Psoas muscle (tissue), 8 donors: ENCODE measurements at regions of chr6 and their contacts with region 1.

Region 1: DNA sequence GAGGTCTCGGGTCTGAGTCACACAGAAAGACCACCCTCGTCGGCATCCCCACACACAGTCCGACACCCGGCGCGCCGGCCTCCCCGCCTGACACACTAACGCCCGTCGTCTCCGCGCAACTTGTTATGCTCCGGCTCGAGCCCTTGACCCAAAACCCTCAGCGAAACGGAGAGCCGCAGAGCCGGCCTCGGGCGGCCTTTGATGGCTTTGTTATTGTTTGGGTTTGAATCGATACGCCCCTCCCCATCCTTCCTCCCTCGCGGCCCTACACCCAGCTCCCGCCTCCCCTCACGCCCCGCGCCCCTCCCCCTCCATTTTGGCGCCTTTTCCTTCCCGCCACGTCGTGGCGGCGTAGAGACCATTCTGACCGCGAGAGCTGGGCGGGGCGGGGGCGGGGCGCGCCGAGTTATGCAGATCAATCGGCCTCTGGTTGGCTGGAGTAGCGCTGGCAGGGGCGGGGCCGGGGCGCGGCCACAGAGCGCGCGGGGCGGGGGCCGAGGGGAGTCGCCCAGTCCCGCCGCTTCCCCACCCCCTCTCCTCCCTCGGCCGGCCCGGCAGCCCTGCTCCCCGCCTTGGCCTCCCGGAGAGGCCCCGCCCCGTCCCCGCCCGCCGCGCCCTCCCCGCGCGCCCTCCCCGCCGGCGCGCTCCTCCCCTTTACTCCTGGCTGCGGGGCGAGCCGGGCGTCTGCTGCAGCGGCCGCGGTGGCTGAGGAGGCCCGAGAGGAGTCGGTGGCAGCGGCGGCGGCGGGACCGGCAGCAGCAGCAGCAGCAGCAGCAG is at the start of gene PIM1:
- DNase-seq: peak; percentile 100
- ATAC-seq: peak; percentile 88 to 94 (median 90)
- H3K4me3 ChIP-seq: peak within 1 kb of the TSS; percentile 97
- H3K27ac ChIP-seq: peak within 1 kb of the TSS; percentile 94
- H3K4me1 ChIP-seq: peaks cover 10% of the 10 kb centered on the region
- H3K27me3 ChIP-seq: no peaks in the 10 kb centered on the region
- CTCF ChIP-seq: no peak
- total RNA-seq, gene PIM1: 18.0 to 45.5 (median 32.8) TPM

Region 2: GRCh38 chr6:36897609-36898008 is 272.1 kb before region 1 on chr6:
- intact Hi-C with region 1: no loop called
- DNase-seq: no peak
- ATAC-seq: peak in 1 of 4 donors; percentile 41
- H3K4me3 ChIP-seq: no peak overlapping the region
- H3K27ac ChIP-seq: no peak overlapping the region
- H3K4me1 ChIP-seq: no peaks in the 10 kb centered on the region
- H3K27me3 ChIP-seq: no peaks in the 10 kb centered on the region
- CTCF ChIP-seq: no peak

Region 3: GRCh38 chr6:37018198-37019064 is 151.3 kb before region 1 on chr6:
- intact Hi-C with region 1: loop called in 1 of 2 experiments (anchors 1 kb)
- DNase-seq: peak; percentile 90 to 95
- ATAC-seq: peak; percentile 96 to 99 (median 98)
- H3K4me3 ChIP-seq: no peak overlapping the region
- H3K27ac ChIP-seq: no peak overlapping the region
- H3K4me1 ChIP-seq: peaks cover 3% of the 10 kb centered on the region
- H3K27me3 ChIP-seq: no peaks in the 10 kb centered on the region
- CTCF ChIP-seq: peak; percentile 74

Region 4: GRCh38 chr6:37029249-37029971 is 140.3 kb before region 1 on chr6:
- intact Hi-C with region 1: loop called in 1 of 2 experiments (anchors 2 kb)
- DNase-seq: peak; percentile 74 to 85
- ATAC-seq: peak; percentile 87 to 91 (median 88)
- H3K4me3 ChIP-seq: no peak overlapping the region
- H3K27ac ChIP-seq: no peak overlapping the region
- H3K4me1 ChIP-seq: no peaks in the 10 kb centered on the region
- H3K27me3 ChIP-seq: no peaks in the 10 kb centered on the region
- CTCF ChIP-seq: peak; percentile 73

Region 5: DNA sequence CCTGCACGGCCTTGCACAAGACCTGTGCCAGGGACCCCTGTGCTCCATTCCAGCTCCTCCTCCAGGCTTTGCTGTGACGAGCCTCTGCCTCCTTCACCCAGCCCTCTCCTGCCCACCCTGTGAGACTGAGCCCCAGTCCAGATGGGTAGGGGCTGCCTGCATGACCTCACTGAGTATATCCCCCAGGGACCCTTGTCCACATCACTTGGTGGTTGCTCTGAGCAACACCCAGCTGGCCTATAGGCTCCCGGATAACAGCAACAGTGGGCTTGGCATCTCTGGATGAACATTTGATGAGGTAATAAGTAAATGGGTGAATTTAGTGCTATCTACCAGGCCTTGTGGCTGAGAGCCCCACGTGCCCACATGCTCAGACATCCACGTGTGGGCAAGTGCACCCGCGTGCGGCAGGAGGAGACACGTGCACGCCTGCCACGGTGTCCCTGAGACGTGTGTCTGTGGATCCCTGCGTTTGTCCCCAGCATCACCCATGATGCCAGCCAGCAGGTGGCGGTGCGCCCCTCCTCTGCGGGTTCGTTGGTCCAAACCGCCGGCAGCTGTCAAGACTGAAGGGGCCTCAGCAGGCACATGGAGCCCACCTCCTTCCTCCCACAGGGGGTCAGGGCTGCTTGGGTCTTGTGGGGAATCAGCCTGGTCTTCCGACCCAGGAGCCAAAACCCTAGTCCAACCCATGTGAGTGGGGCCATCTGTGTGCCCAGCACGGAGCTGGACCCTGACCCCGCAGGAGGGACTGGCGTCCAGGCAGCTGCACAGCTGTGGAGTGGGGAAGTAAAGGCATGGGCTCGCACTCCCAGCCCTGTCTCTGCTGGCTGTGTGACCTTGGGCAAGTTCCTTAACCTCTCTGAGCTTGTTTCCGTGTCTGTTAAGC is 118.3 kb before region 1 on chr6:
- intact Hi-C with region 1: loop called (anchors 1 kb)
- DNase-seq: peak; percentile 92 to 95
- ATAC-seq: peak; percentile 90 to 97 (median 91)
- H3K4me3 ChIP-seq: no peak overlapping the region
- H3K27ac ChIP-seq: peak overlapping the region; percentile 51
- H3K4me1 ChIP-seq: peaks cover 11% of the 10 kb centered on the region
- H3K27me3 ChIP-seq: no peaks in the 10 kb centered on the region
- CTCF ChIP-seq: peak; percentile 93

Region 6: GRCh38 chr6:37102279-37103168 is 67.2 kb before region 1 on chr6:
- intact Hi-C with region 1: loop called in 1 of 2 experiments (anchors 1 kb)
- DNase-seq: peak; percentile 87 to 93
- ATAC-seq: peak; percentile 73 to 80 (median 76)
- H3K4me3 ChIP-seq: peak overlapping the region; percentile 58
- H3K27ac ChIP-seq: peak overlapping the region; percentile 95
- H3K4me1 ChIP-seq: peaks cover 28% of the 10 kb centered on the region
- H3K27me3 ChIP-seq: no peaks in the 10 kb centered on the region
- CTCF ChIP-seq: no peak

Region 7: GRCh38 chr6:37134606-37135191 is 35.0 kb before region 1 on chr6:
- intact Hi-C with region 1: loop called (anchors 1 to 5 kb)
- DNase-seq: peak; percentile 64 to 76
- ATAC-seq: peak; percentile 66 to 75 (median 74)
- H3K4me3 ChIP-seq: no peak overlapping the region
- H3K27ac ChIP-seq: peak overlapping the region; percentile 98
- H3K4me1 ChIP-seq: peaks cover 59% of the 10 kb centered on the region
- H3K27me3 ChIP-seq: no peaks in the 10 kb centered on the region
- CTCF ChIP-seq: no peak

Region 8: GRCh38 chr6:37207903-37208456 is 38.3 kb after region 1 on chr6:
- intact Hi-C with region 1: loop called in 1 of 2 experiments (anchors 2 kb)
- DNase-seq: peak; percentile 83 to 85
- ATAC-seq: peak; percentile 64 to 76 (median 74)
- H3K4me3 ChIP-seq: no peak overlapping the region
- H3K27ac ChIP-seq: no peak overlapping the region
- H3K4me1 ChIP-seq: no peaks in the 10 kb centered on the region
- H3K27me3 ChIP-seq: no peaks in the 10 kb centered on the region
- CTCF ChIP-seq: peak; percentile 66